Colonic mucosa (tissue), 4 donors: ENCODE measurements at regions of chr5 and their contacts with region 1.

Region 1: GRCh38 chr5:145697251-145697990 is 137.7 kb downstream of the PRELID2 start:
- DNase-seq: peak; percentile 30
- H3K4me3 ChIP-seq: no peak overlapping the region
- H3K27ac ChIP-seq: no peak overlapping the region
- H3K4me1 ChIP-seq: no peaks in the 10 kb centered on the region
- H3K27me3 ChIP-seq: no peaks in the 10 kb centered on the region
- CTCF ChIP-seq: peak; percentile 27

Region 2: GRCh38 chr5:145825751-145826180 is 128.3 kb after region 1 on chr5:
- intact Hi-C with region 1: loop called (anchors 10 kb)
- DNase-seq: no peak
- H3K4me3 ChIP-seq: no peak overlapping the region
- H3K27ac ChIP-seq: no peak overlapping the region
- H3K4me1 ChIP-seq: peaks cover 3% of the 10 kb centered on the region
- H3K27me3 ChIP-seq: no peaks in the 10 kb centered on the region
- CTCF ChIP-seq: peak; percentile 47